ENCODE measurements at regions of chr18 and their contacts with region 1.

Region 1: GRCh38 chr18:5057386-5058348 is 139.4 kb downstream of the AKAIN1 start:
- DNase-seq: no peak
- ATAC-seq: peak; percentile 92
- H3K4me3 ChIP-seq: no peak overlapping the region
- H3K27ac ChIP-seq: no peak overlapping the region
- H3K4me1 ChIP-seq: peaks cover 8% of the 10 kb centered on the region
- H3K27me3 ChIP-seq: no peaks in the 10 kb centered on the region
- CTCF ChIP-seq: peak; percentile 80

Region 2: DNA sequence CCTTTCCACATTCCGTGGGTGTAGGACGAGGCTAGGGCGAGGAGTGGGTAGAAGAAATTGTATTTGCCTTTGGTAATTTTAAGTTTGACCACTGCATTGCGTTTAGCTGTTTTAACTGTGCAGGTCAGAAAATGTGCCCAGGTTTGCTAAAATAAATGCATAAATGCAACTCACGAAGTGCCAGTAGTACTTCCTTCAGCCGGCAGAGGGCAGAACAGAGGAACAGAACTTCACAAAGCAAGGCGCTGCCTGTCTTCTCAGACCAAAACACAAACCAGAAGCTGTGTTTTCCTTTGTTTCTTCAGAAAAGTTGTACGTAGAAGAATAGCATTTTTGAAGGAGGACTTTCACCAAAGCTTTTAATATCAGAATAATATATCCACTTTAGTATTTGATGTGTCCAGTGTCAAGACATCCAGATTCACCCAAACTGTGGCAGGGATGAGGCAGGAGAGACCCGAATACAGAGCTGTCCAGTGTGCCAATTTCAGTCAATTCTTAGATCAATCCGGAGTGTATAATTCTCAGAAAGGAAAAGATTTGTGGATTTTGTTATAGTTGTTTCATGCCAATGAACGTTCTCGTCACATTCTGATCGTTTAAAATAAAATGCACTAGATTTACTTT is 951.1 kb before region 1 on chr18:
- intact Hi-C with region 1: loop called (anchors 5 kb)
- DNase-seq: no peak
- ATAC-seq: peak; percentile 83
- H3K4me3 ChIP-seq: no peak overlapping the region
- H3K27ac ChIP-seq: no peak overlapping the region
- H3K4me1 ChIP-seq: no peaks in the 10 kb centered on the region
- H3K27me3 ChIP-seq: no peaks in the 10 kb centered on the region
- CTCF ChIP-seq: peak; percentile 78

Region 3: DNA sequence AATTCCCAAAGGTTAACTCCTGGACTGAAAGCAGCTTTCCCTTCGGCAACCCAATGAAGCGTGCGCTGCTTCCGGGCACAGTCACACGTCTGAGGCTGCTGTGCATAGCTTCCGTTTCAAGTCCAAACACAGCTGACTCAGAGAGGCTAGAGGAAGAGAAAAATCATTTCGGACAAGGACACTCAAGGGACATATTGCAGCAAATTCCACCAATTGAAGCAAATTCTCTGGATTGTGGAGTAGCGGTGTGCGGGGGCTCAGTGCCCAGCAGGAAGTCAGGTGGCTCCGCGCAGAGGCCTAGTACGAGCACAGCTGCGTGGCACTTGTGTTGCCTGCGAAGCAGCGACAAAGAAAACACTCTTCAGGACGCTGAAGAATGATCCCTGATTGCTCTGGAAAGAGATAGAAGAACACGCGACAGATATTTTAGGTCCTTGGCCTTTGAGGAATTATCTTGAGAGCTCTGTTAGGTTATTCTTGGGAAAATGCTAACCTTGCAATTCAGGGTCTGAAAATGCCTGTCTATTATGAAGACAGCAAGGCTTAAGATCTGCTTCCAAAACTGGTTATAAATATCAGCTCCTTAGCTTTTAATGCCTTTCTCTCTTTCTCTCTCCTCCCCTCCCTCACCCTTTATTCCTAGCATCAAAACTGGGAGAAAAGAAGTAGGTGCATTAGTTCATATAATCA is 249.9 kb before region 1 on chr18:
- intact Hi-C with region 1: no loop called
- DNase-seq: no peak
- ATAC-seq: no peak
- H3K4me3 ChIP-seq: no peak overlapping the region
- H3K27ac ChIP-seq: no peak overlapping the region
- H3K4me1 ChIP-seq: no peaks in the 10 kb centered on the region
- H3K27me3 ChIP-seq: no peaks in the 10 kb centered on the region
- CTCF ChIP-seq: no peak

Region 4: GRCh38 chr18:5253910-5254309 is 196.2 kb after region 1 on chr18:
- intact Hi-C with region 1: no loop called
- DNase-seq: no peak
- ATAC-seq: no peak
- H3K4me3 ChIP-seq: no peak overlapping the region
- H3K27ac ChIP-seq: no peak overlapping the region
- H3K4me1 ChIP-seq: no peaks in the 10 kb centered on the region
- H3K27me3 ChIP-seq: no peaks in the 10 kb centered on the region
- CTCF ChIP-seq: no peak